Heart left ventricle (tissue), 16 donors: ENCODE measurements at regions of chr11 and their contacts with region 1.

Region 1: GRCh38 chr11:67606492-67607201 is at the start of gene NDUFV1:
- DNase-seq: peak; percentile 97 to 99 (median 98)
- ATAC-seq: peak; percentile 97 to 100 (median 99)
- H3K4me3 ChIP-seq: peak within 1 kb of the TSS; percentile 72 to 100 (median 94)
- H3K27ac ChIP-seq: peak within 1 kb of the TSS; percentile 79 to 97 (median 92)
- H3K4me1 ChIP-seq: peaks cover 3 to 23% (median 17%) of the 10 kb centered on the region in 12 donors
- H3K27me3 ChIP-seq: no peaks in the 10 kb centered on the region
- CTCF ChIP-seq: peak; percentile 50 to 83 (median 72)
- POLR2A ChIP-seq: peak; percentile 45 to 82
- total RNA-seq, gene NDUFV1: 340 to 897 (median 583) TPM

Region 2: GRCh38 chr11:67545280-67545679 is 61.4 kb before region 1 on chr11:
- intact Hi-C with region 1: no loop called
- DNase-seq: peak; percentile 65 to 87 (median 71)
- ATAC-seq: peak; percentile 86 to 93 (median 91)
- H3K4me3 ChIP-seq: no peak overlapping the region
- H3K27ac ChIP-seq: peak overlapping the region in 10 of 12 donors; percentile 0 to 83 (median 38)
- H3K4me1 ChIP-seq: peaks cover 0 to 15% (median 10%) of the 10 kb centered on the region in 12 donors
- H3K27me3 ChIP-seq: no peaks in the 10 kb centered on the region
- CTCF ChIP-seq: peak in 9 of 12 donors; percentile 12 to 57 (median 31)
- POLR2A ChIP-seq: no peak

Region 3: DNA sequence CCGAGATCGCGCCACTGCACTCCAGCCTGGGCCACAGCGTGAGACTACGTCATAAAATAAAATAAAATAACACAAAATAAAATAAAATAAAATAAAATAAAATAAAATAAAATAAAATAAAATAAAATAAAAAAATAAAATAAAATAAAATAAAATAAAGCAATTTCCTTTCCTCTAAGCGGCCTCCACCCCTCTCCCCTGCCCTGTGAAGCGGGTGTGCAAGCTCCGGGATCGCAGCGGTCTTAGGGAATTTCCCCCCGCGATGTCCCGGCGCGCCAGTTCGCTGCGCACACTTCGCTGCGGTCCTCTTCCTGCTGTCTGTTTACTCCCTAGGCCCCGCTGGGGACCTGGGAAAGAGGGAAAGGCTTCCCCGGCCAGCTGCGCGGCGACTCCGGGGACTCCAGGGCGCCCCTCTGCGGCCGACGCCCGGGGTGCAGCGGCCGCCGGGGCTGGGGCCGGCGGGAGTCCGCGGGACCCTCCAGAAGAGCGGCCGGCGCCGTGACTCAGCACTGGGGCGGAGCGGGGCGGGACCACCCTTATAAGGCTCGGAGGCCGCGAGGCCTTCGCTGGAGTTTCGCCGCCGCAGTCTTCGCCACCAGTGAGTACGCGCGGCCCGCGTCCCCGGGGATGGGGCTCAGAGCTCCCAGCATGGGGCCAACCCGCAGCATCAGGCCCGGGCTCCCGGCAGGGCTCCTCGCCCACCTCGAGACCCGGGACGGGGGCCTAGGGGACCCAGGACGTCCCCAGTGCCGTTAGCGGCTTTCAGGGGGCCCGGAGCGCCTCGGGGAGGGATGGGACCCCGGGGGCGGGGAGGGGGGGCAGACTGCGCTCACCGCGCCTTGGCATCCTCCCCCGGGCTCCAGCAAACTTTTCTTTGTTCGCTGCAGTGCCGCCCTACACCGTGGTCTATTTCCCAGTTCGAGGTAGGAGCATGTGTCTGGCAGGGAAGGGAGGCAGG is 23.1 kb before region 1 on chr11 and contains the start of gene GSTP1:
- intact Hi-C with region 1: loop called in 4 of 10 experiments (anchors 1 to 2 kb)
- DNase-seq: peak; percentile 93 to 96 (median 95)
- ATAC-seq: peak; percentile 92 to 97 (median 97)
- H3K4me3 ChIP-seq: peak within 1 kb of the TSS; percentile 49 to 97 (median 81)
- H3K27ac ChIP-seq: peak within 1 kb of the TSS; percentile 93 to 100 (median 99)
- H3K4me1 ChIP-seq: peaks cover 0 to 57% (median 12%) of the 10 kb centered on the region in 12 donors
- H3K27me3 ChIP-seq: no peaks in the 10 kb centered on the region
- CTCF ChIP-seq: peak; percentile 56 to 92 (median 86)
- POLR2A ChIP-seq: peak; percentile 78 to 97
- total RNA-seq, gene GSTP1: 294 to 830 (median 341) TPM

Region 4: GRCh38 chr11:67674442-67674901 is 67.8 kb after region 1 on chr11 and contains the start of gene ALDH3B2:
- intact Hi-C with region 1: no loop called
- DNase-seq: no peak
- ATAC-seq: no peak
- H3K4me3 ChIP-seq: no peak within 1 kb of the TSS
- H3K27ac ChIP-seq: no peak within 1 kb of the TSS
- H3K4me1 ChIP-seq: no peaks in the 10 kb centered on the region
- H3K27me3 ChIP-seq: peaks cover 0 to 14% (median 0%) of the 10 kb centered on the region in 9 donors
- CTCF ChIP-seq: no peak
- POLR2A ChIP-seq: no peak
- total RNA-seq, gene ALDH3B2: not detected

Region 5: DNA sequence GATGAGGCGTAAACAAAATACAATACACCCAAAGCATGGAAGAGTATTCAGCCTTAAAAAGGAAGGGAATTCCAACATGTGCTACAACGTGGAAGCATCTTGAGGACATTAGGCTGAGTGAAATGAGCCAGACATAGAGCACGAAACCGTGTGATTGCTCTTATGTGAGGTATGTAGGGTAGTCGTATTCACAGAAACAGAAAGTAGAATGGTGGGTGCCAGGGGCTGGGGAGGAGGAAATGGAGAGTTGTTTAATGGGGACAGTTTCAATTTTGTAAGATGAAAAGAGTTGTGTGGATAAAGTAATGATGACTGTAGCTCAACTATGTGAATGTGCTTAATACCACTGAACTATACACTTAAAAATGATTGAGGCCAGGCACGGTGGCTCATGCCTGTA is 616.6 kb after region 1 on chr11:
- intact Hi-C with region 1: no loop called
- DNase-seq: no peak
- ATAC-seq: no peak
- H3K4me3 ChIP-seq: no peak overlapping the region
- H3K27ac ChIP-seq: no peak overlapping the region
- H3K4me1 ChIP-seq: peaks cover 0 to 5% (median 0%) of the 10 kb centered on the region in 12 donors
- H3K27me3 ChIP-seq: no peaks in the 10 kb centered on the region
- CTCF ChIP-seq: no peak
- POLR2A ChIP-seq: no peak